CD8-positive, alpha-beta T cell (primary cell): ENCODE measurements at regions of chr1 and their contacts with region 1.

Region 1: DNA sequence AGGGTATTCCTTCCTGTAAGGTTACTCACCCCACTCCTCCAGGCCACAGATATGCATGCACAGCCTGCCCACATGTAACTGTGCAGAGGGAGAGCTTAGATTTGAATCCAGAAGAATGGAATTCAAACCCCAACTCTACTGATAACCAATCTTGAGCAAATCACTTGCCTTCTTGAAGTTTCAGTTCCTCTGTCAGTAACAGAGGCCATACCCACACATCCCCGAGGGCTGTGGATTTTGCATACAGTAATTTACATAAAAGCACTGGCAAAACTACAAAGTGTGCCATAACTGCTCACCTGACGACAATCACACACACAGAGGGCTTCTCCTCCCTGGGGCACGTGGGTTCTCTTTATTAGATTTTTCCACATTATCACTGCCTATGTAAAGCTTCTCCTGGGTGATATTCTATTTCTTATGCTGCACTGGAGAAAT is 18.6 kb downstream of the CD247 start:
- DNase-seq: peak in 4 of 9 experiments; percentile 37 to 66 (median 40)
- ATAC-seq: peak; percentile 70
- H3K4me3 ChIP-seq: no peak overlapping the region
- H3K4me3 Mint-ChIP-seq: peak overlapping the region; percentile 58
- H3K27ac ChIP-seq: peak overlapping the region in 1 of 2 experiments; percentile 65
- H3K27ac Mint-ChIP-seq: peak overlapping the region; percentile 86
- H3K4me1 ChIP-seq: peaks cover 100% of the 10 kb centered on the region
- H3K4me1 Mint-ChIP-seq: peaks cover 99% of the 10 kb centered on the region
- H3K27me3 ChIP-seq: no peaks in the 10 kb centered on the region
- H3K27me3 Mint-ChIP-seq: no peaks in the 10 kb centered on the region
- CTCF ChIP-seq: no peak

Region 2: DNA sequence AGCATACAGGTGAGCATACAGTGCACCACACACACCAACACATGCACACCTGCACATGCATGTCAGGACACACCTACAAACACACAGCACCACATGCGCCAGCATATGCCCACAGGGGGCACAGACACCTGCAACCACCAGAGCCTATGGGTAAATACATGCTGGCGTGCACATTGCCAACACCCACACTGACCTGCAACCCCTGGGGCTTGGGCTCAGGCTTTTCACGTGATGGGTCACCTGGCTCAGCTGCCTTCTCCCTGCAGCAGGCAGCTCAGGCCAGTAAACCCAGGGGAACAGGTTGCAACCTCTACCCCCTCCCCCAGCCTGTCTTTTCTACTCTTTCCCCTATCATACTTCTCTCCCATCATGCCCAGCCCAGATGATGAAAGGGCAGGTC is 10.6 kb after region 1 on chr1:
- CTCF ChIA-PET with region 1: interaction called, 5 read pairs
- POLR2A ChIA-PET with region 1: interaction called, 15 read pairs
- intact Hi-C with region 1: loop called (anchors 1 to 2 kb)
- DNase-seq: peak in 2 of 9 experiments; percentile 42 to 49
- ATAC-seq: peak; percentile 16
- H3K4me3 ChIP-seq: no peak overlapping the region
- H3K4me3 Mint-ChIP-seq: peak overlapping the region; percentile 78
- H3K27ac ChIP-seq: peak overlapping the region in 1 of 2 experiments; percentile 45
- H3K27ac Mint-ChIP-seq: peak overlapping the region; percentile 85
- H3K4me1 ChIP-seq: peaks cover 77% of the 10 kb centered on the region
- H3K4me1 Mint-ChIP-seq: peaks cover 90% of the 10 kb centered on the region
- H3K27me3 ChIP-seq: no peaks in the 10 kb centered on the region
- H3K27me3 Mint-ChIP-seq: no peaks in the 10 kb centered on the region
- CTCF ChIP-seq: no peak